ENCODE measurements at regions of chr3 and their contacts with region 1.

Region 1: DNA sequence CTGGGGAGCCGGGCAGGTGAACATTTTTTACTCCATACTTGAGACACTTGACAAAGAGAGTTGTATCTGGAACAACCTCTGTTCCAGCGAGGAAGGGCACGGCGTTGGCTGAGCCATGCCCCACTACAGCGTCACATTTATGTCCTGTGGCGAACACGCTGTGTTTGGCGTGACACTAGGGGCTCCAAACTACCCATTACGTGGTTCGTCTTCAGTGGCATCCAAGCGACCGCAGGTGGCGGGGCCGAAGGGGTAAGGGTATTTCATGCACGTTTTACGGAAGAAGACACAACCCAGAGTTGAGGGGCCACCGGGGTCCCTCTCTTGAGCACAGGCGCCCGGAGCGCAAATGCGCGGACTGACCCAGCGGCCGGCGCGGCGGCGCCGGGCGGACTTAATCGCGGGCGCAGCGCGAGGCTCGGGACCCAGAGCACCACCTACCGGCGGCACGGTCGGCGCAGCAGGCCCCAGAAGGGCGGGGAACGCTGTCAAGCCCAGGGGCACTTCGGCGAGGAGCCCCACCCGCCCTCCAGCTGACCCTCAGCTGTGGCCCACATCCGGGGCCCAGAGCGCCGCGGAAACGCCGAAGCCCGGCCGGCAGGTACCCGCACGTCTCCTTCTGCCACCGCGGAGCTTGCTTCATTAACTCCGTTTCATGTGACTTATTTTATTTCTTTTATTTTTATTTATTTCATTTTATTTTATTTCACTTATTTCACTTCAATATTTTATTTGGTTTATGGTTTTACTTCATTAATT is 36.4 kb upstream of the TRIM71 start:
- DNase-seq: peak; percentile 74
- H3K4me3 Mint-ChIP-seq: peak overlapping the region; percentile 77
- H3K27ac Mint-ChIP-seq: no peak overlapping the region
- H3K4me1 Mint-ChIP-seq: peaks cover 2% of the 10 kb centered on the region
- H3K27me3 Mint-ChIP-seq: peaks cover 18% of the 10 kb centered on the region

Region 2: DNA sequence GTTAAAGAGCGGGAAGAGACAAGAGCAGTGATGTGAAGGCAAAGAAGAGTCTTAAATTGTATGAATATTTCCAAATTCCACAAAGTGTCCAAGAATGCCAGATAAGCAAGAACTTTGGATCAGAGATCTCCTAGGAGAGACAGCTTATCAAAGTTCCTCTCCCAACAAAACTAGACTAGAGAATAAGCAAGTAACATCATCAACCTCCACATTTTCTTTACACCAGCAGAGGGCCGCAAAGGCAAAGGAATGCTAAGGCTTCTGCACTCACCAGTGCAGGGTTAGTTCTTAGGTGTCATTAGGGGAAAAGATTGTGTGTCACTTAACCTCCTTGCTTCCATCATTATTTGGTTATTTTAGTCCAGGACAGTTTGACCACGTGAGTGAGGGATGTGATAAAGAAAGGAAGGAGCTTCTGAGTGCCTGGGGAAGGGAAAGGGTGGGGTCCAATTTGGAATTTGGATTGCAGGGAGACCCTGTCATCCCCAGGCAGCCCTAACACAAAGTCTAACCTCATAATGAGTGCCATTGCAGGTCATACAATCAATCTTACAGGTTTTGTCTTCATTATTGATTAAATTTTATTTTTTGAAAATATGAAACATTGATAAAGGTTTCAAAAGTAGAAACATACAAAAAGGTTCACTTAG is 271.2 kb before region 1 on chr3:
- CTCF ChIA-PET with region 1: interaction called, 3 read pairs
- intact Hi-C with region 1: loop called (anchors 1 kb)
- DNase-seq: peak; percentile 86
- H3K4me3 Mint-ChIP-seq: no peak overlapping the region
- H3K27ac Mint-ChIP-seq: no peak overlapping the region
- H3K4me1 Mint-ChIP-seq: peaks cover 2% of the 10 kb centered on the region
- H3K27me3 Mint-ChIP-seq: no peaks in the 10 kb centered on the region

Region 3: DNA sequence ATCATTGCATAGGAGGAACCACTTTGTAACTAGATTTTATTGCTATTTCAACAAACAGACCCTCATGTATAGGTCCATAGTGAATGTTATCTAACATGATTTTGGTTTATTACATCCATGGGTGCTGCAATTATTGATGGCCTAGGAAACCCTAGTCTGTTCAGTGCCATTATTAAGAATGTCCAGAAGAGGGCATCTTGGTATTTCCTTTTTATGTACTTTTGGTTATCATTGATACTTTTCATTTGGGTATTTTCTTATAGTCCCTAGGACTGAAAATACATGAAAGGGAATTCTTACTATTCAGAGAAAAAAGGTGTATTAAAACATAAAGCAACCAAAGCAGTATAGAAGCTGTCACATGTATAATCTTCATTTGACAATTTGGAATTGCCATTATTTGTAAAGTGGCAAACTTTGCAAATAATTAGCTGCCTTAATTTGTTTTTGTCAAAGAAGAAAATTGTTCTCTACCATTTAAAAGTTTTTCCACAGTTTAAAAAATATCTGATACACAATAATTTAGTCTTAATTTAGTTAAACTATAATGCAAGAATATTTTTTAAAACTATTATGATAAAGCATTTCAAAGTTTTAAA is 47.7 kb before region 1 on chr3:
- CTCF ChIA-PET with region 1: interaction called, 4 read pairs
- intact Hi-C with region 1: loop called (anchors 1 kb)
- DNase-seq: no peak
- H3K4me3 Mint-ChIP-seq: no peak overlapping the region
- H3K27ac Mint-ChIP-seq: no peak overlapping the region
- H3K4me1 Mint-ChIP-seq: no peaks in the 10 kb centered on the region
- H3K27me3 Mint-ChIP-seq: no peaks in the 10 kb centered on the region

Region 4: GRCh38 chr3:32816439-32817256 is 35.3 kb after region 1 on chr3:
- CTCF ChIA-PET with region 1: interaction called, 4 read pairs
- intact Hi-C with region 1: loop called (anchors 1 kb)
- DNase-seq: peak; percentile 22
- H3K4me3 Mint-ChIP-seq: peak overlapping the region; percentile 69
- H3K27ac Mint-ChIP-seq: no peak overlapping the region
- H3K4me1 Mint-ChIP-seq: peaks cover 27% of the 10 kb centered on the region
- H3K27me3 Mint-ChIP-seq: peaks cover 53% of the 10 kb centered on the region

Region 5: DNA sequence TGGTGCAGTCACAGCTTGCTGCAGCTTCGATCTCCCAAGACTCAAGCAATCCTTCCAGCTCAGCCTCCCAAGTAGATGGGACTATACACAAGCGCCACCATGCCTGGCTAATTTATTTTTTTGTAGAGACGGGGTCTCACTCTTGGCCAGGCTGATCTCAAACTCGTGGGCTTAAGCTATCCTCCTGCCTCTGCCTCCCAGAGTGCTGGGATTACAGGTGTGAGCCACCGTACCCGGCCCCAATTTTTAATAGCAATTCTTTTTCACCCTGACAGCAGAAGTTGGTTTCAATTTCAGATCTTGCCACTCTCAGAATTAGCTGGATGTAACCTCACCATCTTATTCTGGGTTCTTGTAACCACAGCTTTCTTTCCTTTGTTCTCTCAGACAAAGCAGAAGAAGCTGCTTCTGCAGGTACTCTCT is 101.2 kb after region 1 on chr3:
- CTCF ChIA-PET with region 1: interaction called, 3 read pairs
- intact Hi-C with region 1: loop called (anchors 5 kb)
- DNase-seq: peak; percentile 30
- H3K4me3 Mint-ChIP-seq: no peak overlapping the region
- H3K27ac Mint-ChIP-seq: no peak overlapping the region
- H3K4me1 Mint-ChIP-seq: peaks cover 12% of the 10 kb centered on the region
- H3K27me3 Mint-ChIP-seq: peaks cover 15% of the 10 kb centered on the region

Region 6: DNA sequence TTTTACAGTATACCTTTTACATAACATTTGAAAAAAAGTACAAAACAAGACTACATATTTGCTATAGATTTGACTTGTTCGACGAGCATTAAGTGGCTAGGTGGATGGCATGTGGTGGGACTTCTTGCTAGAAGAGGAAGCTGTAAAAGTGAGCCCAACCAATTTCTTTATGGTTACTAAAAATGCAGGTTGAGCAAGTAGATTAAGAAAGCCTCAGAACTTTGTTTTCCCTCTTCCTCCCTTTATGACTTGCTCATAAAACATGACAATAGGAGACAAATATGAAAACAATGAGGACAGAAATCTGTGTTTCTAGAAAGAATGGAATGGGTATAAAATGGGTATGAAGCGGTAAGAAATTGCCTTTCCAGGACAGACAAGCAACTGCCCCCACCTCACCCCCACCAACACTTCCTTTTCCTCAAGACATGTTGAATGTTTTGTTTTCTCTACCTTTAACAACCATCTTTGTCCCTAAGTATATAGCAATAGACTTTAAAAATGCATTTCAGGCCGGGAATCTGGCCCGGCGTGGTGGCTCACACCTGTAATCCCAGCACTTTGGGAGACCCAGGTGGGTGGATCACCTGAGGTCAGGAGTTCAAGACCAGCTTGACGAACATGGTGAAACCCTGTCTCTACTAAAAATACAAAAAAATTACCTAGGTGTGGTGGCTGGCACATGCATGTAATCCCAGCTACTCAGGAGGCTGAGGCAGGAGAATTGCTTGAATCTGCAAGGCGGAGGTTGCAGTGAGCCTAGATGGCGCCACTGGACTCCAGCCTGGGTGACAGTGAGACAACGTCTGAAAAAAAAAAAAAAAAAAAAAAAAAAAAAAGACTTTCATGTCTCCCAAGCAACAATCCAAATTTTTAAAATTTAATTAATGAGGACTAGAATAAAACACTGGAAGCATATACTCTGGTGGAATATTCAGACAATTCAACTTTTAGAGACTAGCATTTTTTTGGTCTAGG is 120.3 kb after region 1 on chr3:
- CTCF ChIA-PET with region 1: interaction called, 4 read pairs
- intact Hi-C with region 1: loop called (anchors 1 kb)
- DNase-seq: peak; percentile 66
- H3K4me3 Mint-ChIP-seq: peak overlapping the region; percentile 43
- H3K27ac Mint-ChIP-seq: no peak overlapping the region
- H3K4me1 Mint-ChIP-seq: peaks cover 2% of the 10 kb centered on the region
- H3K27me3 Mint-ChIP-seq: peaks cover 3% of the 10 kb centered on the region

Region 7: DNA sequence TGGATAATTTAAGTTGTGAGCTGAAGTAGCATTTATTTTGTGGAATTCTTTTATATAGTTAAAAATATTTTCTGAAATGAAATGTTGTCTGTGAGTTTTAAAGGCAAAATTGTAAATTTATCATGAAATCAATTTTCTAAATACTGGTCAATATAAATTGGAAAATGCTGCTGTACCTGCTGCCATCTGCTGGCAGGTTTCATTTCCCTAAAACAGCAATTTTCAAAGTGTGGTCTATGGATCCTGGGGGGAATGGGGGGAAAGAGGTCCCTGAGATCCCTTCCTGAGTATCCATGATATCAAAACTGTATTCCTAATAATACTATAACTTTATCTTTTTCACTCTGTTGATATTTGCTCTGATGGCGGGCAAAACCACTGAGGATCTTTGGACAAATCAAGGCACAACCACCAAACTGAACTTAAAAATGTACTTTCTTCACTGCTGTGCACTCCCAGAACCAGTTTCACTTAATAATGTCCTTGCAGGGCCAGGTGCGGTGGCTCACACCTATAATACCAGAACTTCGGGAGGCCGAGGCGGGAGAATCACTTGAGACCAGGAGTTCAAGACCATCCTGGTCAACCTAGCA is 152.9 kb after region 1 on chr3:
- CTCF ChIA-PET with region 1: interaction called, 4 read pairs
- intact Hi-C with region 1: loop called (anchors 1 kb)
- DNase-seq: peak; percentile 52
- H3K4me3 Mint-ChIP-seq: no peak overlapping the region
- H3K27ac Mint-ChIP-seq: no peak overlapping the region
- H3K4me1 Mint-ChIP-seq: no peaks in the 10 kb centered on the region
- H3K27me3 Mint-ChIP-seq: peaks cover 4% of the 10 kb centered on the region

Measured in activated naive CD4-positive, alpha-beta T cell treated with anti-CD3 and anti-CD28 coated beads for 36 hours (primary cell).